ENCODE measurements at regions of chr3 and their contacts with region 1.

Region 1: DNA sequence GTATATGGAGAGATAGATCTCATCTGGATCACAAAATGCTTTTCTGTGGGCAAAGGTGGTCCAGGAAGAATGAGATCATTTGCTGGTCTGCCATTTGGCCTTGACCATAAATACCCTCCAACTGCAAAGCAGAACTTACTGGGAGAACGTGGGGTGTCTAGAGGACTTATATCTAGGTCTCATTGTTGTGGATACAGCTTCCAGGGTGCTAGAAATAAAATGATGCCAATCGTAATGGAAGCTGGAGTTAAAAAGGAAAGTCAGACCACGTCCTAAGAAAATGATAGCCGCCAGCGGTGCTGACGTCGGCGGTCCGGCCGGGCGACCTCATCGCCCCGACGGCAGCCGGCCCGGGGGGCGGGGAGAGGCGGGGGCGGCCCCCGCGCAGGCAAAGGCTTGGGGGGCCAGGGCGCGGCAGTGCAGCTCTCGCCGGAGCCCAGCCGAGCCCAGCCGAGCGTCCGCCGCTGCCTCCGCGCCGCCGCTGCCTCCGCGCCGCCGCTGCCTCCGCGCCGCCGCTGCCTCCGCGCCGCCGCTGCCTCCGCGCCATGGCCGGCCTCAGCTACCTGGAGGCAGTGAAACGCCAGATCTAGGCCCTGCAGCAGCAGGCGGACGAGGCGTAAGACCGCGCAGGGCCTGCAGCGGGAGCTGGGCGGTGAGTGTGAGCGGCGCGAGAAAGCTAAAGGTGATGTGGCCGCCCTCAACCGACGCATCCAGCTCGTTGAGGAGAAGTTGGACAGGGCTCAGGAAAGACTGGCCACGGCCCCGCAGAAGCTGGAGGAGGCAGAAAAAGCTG is 89.5 kb downstream of the EOMES start:
- DNase-seq: peak; percentile 60
- ATAC-seq: peak; percentile 71
- H3K4me3 Mint-ChIP-seq: peak overlapping the region; percentile 75
- H3K27ac Mint-ChIP-seq: peak overlapping the region; percentile 77
- H3K4me1 Mint-ChIP-seq: peaks cover 28% of the 10 kb centered on the region
- H3K27me3 Mint-ChIP-seq: no peaks in the 10 kb centered on the region

Region 2: DNA sequence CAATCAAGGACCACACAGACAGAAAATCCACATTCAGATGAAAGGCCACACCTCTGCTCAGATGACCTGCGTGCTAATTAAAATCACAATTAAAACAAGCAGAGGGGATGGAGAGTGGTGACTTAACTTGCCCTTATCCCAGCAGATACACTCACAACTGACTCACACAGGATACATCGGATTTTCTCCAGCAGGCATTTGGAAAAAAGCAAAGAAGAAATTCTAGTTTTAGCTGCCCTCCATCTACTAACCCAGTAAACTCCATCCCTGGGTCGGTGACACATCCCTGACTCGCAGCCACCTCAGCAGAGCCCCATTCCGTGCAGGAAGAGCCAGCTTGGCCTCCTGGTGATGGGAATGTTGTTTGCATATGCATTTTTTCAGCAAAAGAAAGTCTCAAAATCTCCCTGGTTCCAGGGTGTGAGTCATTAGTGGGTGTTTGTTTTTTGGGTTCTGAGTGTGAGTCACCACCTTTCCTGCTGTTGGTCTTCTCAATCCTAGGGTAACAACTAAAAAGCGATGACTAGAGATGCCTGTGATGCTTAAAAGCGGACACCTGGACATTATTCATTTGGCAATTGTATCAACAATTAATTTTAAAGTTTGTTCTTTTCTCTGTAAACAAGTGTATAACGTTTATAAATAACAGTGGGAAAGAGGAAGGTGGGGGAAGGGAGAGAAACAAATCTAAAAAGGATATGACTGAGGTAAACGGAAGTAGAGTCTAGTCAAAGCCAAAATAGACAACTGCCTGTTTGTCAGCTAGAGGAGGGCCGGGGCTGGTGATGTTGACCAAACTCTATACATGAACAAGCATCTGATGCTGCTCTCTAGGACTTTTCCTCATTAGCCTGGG is 98.7 kb before region 1 on chr3:
- CTCF ChIA-PET with region 1: no interaction called
- POLR2A ChIA-PET with region 1: no interaction called
- intact Hi-C with region 1: loop called in 1 of 2 experiments (anchors 2 kb)
- DNase-seq: peak; percentile 61
- ATAC-seq: peak; percentile 92
- H3K4me3 Mint-ChIP-seq: peak overlapping the region; percentile 20
- H3K27ac Mint-ChIP-seq: peak overlapping the region; percentile 81
- H3K4me1 Mint-ChIP-seq: peaks cover 11% of the 10 kb centered on the region
- H3K27me3 Mint-ChIP-seq: no peaks in the 10 kb centered on the region

Region 3: DNA sequence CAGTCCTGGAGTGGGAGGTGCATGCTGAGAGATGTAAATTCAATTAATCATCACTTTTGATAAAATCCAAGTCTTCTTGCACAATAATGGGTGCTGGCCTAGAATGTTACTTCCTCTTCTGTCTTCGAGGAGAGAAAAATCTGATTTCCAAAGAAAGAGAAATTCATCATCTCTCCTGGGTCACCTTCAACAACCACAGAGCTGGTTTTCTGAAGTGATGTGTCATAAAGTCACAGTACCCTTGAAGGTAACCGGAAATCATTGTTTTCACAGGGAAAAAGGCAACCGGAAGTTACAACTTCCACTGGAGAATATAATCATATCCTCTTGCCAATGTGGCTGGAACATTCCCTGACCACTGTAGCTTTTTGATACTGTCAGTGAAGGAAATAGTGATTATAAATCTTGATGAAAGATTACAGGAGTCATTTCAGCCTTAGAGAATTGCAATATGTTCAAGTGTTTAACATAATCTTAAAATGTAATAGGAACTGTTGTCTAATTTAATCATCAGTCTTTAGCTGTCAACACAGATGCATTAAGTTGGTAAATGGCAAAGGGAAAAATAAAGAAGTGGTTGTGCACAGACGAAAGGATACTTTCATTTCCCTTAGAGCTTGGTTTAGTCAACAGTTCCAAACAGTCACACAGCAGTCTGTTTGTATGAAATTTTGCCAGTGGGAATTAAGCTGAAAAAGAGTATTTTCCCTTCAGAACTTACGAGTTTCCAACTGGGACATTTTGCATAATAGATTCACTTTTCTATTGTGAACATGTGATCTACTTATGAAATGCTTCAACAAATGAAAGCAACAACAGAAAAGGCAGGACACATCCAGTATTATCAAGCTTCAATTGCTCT is 42.0 kb before region 1 on chr3:
- CTCF ChIA-PET with region 1: interaction called, 5 read pairs
- POLR2A ChIA-PET with region 1: no interaction called
- intact Hi-C with region 1: loop called (anchors 1 to 2 kb)
- DNase-seq: peak; percentile 22
- ATAC-seq: peak; percentile 79
- H3K4me3 Mint-ChIP-seq: peak overlapping the region; percentile 41
- H3K27ac Mint-ChIP-seq: peak overlapping the region; percentile 81
- H3K4me1 Mint-ChIP-seq: peaks cover 26% of the 10 kb centered on the region
- H3K27me3 Mint-ChIP-seq: no peaks in the 10 kb centered on the region

Region 4: GRCh38 chr3:27596334-27596841 is 36.2 kb before region 1 on chr3:
- CTCF ChIA-PET with region 1: interaction called, 5 read pairs
- POLR2A ChIA-PET with region 1: no interaction called
- intact Hi-C with region 1: loop called (anchors 1 to 2 kb)
- DNase-seq: peak; percentile 10
- ATAC-seq: peak; percentile 71
- H3K4me3 Mint-ChIP-seq: no peak overlapping the region
- H3K27ac Mint-ChIP-seq: no peak overlapping the region
- H3K4me1 Mint-ChIP-seq: peaks cover 20% of the 10 kb centered on the region
- H3K27me3 Mint-ChIP-seq: no peaks in the 10 kb centered on the region

Region 5: GRCh38 chr3:28348629-28349483 is 716.2 kb after region 1 on chr3 and contains the starts of genes AZI2 and ZCWPW2:
- CTCF ChIA-PET with region 1: no interaction called
- POLR2A ChIA-PET with region 1: no interaction called
- intact Hi-C with region 1: loop called in 1 of 2 experiments (anchors 5 kb)
- DNase-seq: peak; percentile 96
- ATAC-seq: peak; percentile 87
- H3K4me3 Mint-ChIP-seq: peak within 1 kb of the TSS; percentile 98
- H3K27ac Mint-ChIP-seq: peak within 1 kb of the TSS; percentile 98
- H3K4me1 Mint-ChIP-seq: peaks cover 43% of the 10 kb centered on the region
- H3K27me3 Mint-ChIP-seq: no peaks in the 10 kb centered on the region
- total RNA-seq, gene AZI2: 52.3 to 78.8 TPM
- total RNA-seq, gene ZCWPW2: 0.37 to 0.39 TPM